Activated CD8-positive, alpha-beta T cell treated with anti-CD3 and anti-CD28 coated beads for 36 hours (primary cell): ENCODE measurements at regions of chr3 and their contacts with region 1.

Region 1: GRCh38 chr3:119559441-119559963 is at the start of gene CD80:
- DNase-seq: peak; percentile 91
- ATAC-seq: peak; percentile 78
- H3K4me3 Mint-ChIP-seq: peak within 1 kb of the TSS; percentile 40
- H3K27ac Mint-ChIP-seq: peak within 1 kb of the TSS; percentile 77
- H3K4me1 Mint-ChIP-seq: peaks cover 45% of the 10 kb centered on the region
- H3K27me3 Mint-ChIP-seq: no peaks in the 10 kb centered on the region
- CTCF ChIP-seq: peak; percentile 40
- total RNA-seq, gene CD80: 7.1 to 10.2 TPM

Region 2: DNA sequence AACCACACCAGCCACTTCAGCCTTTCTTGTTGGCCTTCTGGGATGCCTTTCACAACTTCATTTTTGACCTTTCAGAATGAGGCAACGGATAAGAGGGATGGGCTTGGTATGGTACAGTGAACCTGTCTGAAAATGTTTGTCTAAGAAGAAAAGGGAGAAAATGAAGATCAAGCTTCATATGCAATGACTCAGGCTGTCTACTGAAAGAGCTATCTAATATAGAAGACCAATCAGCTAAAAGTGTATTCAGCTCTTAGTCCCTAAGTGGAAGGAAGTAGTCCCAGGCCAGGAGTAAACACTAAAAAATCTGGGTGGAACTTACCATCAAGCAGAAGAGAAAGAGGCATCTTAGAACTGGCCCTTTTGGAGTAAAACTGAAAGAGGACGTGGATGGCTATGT is 398.3 kb before region 1 on chr3:
- CTCF ChIA-PET with region 1: no interaction called
- POLR2A ChIA-PET with region 1: no interaction called
- intact Hi-C with region 1: no loop called
- DNase-seq: no peak
- ATAC-seq: no peak
- H3K4me3 Mint-ChIP-seq: no peak overlapping the region
- H3K27ac Mint-ChIP-seq: no peak overlapping the region
- H3K4me1 Mint-ChIP-seq: no peaks in the 10 kb centered on the region
- H3K27me3 Mint-ChIP-seq: peaks cover 14% of the 10 kb centered on the region
- CTCF ChIP-seq: no peak

Region 3: DNA sequence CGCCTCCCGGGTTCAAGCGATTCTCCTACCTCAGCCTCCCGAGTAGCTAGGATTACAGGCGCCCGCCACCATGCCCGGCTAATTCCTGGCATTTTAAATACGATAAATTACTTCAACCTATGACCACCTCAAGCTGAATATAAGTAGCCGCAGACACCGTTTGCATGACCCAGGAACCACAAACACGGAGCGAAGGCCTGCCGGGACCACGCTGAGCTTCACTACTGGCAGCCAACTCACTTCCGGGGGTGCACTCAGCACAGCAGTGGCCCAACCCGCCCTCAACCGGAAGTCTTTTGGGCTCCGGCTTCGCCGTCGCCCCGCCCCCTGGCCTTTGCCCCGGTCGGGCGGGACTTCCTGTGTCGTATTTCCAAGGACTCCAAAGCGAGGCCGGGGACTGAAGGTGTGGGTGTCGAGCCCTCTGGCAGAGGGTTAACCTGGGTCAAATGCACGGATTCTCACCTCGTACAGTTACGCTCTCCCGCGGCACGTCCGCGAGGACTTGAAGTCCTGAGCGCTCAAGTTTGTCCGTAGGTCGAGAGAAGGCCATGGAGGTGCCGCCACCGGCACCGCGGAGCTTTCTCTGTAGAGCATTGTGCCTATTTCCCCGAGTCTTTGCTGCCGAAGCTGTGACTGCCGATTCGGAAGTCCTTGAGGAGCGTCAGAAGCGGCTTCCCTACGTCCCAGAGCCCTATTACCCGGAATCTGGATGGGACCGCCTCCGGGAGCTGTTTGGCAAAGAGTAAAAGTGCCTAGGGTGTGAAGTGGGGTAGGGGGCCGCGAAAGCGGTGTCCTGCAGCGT is 61.1 kb before region 1 on chr3 and contains the start of gene TIMMDC1:
- CTCF ChIA-PET with region 1: no interaction called
- POLR2A ChIA-PET with region 1: interaction called, 14 read pairs
- intact Hi-C with region 1: no loop called
- DNase-seq: peak; percentile 98
- ATAC-seq: peak; percentile 99
- H3K4me3 Mint-ChIP-seq: peak within 1 kb of the TSS; percentile 99
- H3K27ac Mint-ChIP-seq: peak within 1 kb of the TSS; percentile 96
- H3K4me1 Mint-ChIP-seq: peaks cover 37% of the 10 kb centered on the region
- H3K27me3 Mint-ChIP-seq: no peaks in the 10 kb centered on the region
- CTCF ChIP-seq: no peak
- total RNA-seq, gene TIMMDC1: 105 TPM

Region 4: DNA sequence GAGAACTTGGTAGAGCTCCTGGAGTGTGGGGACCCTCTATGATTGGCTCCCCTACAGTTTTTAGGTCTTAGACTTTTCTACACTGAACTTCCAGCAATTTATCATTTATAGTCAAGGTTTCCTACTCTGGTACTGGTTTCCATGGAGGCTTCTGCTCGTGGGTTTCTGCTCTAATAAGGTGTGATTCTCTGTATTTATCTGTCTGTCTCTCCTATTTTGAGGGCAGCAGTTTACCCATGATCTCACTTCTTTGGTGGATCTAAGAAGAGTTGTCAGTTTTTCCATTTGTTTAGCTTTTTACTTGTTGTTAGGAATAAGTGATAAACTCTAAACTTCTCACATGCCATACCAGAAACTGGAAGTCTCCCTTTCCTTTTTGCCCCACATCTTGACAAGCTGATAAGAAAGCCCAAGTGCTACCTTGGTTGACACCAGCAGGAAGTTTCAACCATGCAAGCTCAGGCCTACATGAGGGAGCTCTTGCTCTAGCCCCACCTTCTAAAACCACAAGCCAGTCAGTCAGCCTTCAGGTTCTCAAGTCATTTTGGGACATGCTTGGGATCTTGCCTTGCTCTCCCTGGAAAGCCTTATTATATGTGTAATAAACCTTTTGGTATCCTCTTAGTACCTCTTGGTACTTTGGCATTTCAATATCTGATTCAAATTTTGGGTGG is 51.2 kb before region 1 on chr3:
- CTCF ChIA-PET with region 1: no interaction called
- POLR2A ChIA-PET with region 1: interaction called, 4 read pairs
- intact Hi-C with region 1: loop called (anchors 5 kb)
- DNase-seq: peak; percentile 52
- ATAC-seq: peak; percentile 89
- H3K4me3 Mint-ChIP-seq: peak overlapping the region; percentile 1
- H3K27ac Mint-ChIP-seq: peak overlapping the region; percentile 79
- H3K4me1 Mint-ChIP-seq: peaks cover 41% of the 10 kb centered on the region
- H3K27me3 Mint-ChIP-seq: no peaks in the 10 kb centered on the region
- CTCF ChIP-seq: no peak

Region 5: DNA sequence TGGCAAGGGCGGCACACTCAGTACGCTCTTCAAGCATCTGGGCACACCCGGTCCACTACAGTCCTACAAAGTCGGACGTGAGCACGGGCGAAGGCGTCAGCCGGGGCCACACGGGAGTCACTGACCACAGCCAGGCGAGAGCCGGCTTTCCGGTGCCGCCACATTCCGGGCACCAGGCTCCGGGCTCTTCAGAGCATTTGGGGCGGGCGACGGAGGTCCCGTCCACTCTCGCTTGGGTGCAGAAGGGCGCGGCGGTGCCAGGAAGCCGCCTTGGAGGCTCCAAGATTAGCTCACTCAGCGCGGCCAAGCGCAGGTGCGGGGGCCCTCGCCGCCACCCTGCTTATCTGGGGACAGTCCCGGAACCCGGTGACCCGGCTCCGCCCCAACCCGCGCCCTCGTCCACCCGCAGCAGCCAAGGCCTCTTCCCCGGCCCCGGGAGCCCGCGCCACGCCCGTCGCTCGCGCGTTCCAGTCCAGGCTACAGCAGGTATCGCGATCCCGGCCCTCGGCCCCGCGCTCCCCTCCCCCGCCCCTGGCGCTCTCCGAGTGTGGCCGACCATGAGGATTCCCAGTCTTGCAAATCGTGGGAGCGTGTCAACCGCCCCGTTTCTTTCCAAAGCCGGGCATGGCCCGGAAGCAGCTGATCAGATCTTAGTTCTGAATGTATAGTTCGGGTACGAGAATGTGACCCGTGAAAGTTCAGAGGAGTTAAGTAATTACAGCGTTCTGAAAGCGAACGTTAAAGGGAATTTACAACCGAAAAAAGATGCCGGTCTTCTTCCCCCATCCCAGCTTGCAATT is 20.1 kb after region 1 on chr3 and contains the start of gene ADPRH:
- CTCF ChIA-PET with region 1: interaction called, 12 read pairs
- POLR2A ChIA-PET with region 1: interaction called, 3 read pairs
- intact Hi-C with region 1: no loop called
- DNase-seq: peak; percentile 74
- ATAC-seq: peak; percentile 79
- H3K4me3 Mint-ChIP-seq: peak within 1 kb of the TSS; percentile 86
- H3K27ac Mint-ChIP-seq: peak within 1 kb of the TSS; percentile 86
- H3K4me1 Mint-ChIP-seq: peaks cover 20% of the 10 kb centered on the region
- H3K27me3 Mint-ChIP-seq: peaks cover 17% of the 10 kb centered on the region
- CTCF ChIP-seq: no peak
- total RNA-seq, gene ADPRH: 5.7 to 5.9 TPM